ENCODE measurements at regions of chr1 and their contacts with region 1.

Region 1: GRCh38 chr1:86833461-86834215 is 80.3 kb downstream of the SELENOF start:
- DNase-seq: peak; percentile 62
- H3K4me3 Mint-ChIP-seq: no peak overlapping the region
- H3K27ac Mint-ChIP-seq: no peak overlapping the region
- H3K4me1 Mint-ChIP-seq: peaks cover 5% of the 10 kb centered on the region
- H3K27me3 Mint-ChIP-seq: peaks cover 2% of the 10 kb centered on the region

Region 2: DNA sequence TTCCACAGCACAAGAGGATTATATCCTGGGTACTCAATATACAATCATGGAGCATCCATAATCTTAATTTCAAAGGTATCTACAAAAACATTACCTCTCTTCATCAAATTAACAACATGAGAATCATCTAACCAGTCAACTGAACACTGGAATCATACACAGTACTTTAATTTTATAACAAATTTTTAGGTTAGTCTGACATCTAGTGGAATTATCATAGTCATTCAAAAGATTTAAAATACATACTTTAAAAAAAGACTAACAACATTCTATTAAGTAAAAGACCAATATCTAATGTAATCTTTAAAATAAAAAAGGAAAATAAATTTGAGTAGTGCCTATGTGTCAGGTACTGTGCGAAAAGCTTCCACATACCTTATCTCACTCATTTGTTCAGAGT is 146.0 kb before region 1 on chr1:
- CTCF ChIA-PET with region 1: no interaction called
- POLR2A ChIA-PET with region 1: no interaction called
- intact Hi-C with region 1: no loop called
- DNase-seq: no peak
- H3K4me3 Mint-ChIP-seq: no peak overlapping the region
- H3K27ac Mint-ChIP-seq: no peak overlapping the region
- H3K4me1 Mint-ChIP-seq: no peaks in the 10 kb centered on the region
- H3K27me3 Mint-ChIP-seq: no peaks in the 10 kb centered on the region

Region 3: DNA sequence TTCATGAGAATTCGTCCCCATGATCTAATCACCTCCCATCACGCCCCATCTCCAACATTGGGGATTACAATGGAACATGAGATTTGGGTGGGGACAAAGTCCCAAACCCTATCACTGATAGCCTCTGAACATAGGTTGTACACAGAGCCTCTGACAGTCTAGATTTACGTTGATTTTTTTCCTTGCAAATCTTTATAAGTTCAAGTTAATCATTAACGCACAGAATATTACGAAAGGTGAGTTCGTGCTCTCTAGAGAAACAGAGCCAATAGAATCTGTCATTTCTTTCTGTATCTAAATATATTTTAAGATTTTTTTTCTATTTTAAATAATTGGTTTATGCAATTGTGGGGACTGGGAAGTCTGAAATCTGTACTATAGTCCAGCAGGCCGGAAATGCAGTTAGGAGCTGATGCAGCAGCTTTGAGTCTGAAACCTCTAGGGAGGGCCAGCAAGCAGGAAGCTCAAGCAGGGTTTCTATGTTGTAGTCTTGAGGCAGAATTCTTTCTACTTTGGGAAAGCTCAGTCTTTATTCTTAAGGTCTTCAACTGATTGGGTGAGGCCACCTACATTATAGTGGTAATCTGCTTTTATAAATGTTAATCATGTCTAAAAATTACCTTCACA is 19.3 kb after region 1 on chr1:
- CTCF ChIA-PET with region 1: no interaction called
- POLR2A ChIA-PET with region 1: no interaction called
- intact Hi-C with region 1: no loop called
- DNase-seq: no peak
- H3K4me3 Mint-ChIP-seq: no peak overlapping the region
- H3K27ac Mint-ChIP-seq: no peak overlapping the region
- H3K4me1 Mint-ChIP-seq: no peaks in the 10 kb centered on the region
- H3K27me3 Mint-ChIP-seq: no peaks in the 10 kb centered on the region

Region 4: DNA sequence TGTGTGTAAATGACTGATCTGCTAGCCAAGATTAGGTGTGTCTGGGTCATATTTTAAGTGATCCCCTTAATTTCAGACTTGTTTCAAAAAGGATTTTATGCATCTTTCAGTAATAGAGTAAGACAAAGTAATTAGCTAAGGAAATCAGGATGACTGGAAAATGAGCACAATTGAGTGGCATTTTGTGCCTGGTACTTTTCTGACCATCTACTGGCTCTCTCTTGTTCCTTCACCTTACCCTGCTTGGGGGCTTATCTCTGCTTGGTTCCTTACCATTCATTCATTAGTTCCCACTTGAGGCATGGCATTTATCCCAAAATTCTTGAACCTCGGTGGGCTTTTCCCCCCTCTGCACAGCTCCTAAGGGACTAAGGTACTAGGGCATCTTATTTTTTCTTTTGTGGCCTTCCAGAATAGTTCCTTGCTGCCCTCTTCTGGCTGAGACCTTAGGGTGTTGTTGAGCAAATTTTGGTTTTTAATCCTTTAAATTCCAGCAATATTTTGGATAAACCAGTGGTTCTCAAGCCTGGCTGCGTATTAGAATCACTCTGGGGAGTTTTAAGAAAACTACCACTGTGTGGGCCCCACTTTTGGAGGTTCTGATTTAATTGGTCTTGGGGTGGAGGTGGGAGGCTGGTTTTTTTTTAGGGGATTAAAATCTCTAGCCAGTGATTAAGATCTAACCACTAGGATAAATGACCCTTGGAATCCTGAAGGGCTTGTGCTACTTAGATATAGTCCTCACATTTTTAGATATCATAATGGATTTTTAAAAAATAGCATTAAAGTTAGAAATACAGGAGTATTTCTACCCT is 131.6 kb after region 1 on chr1:
- CTCF ChIA-PET with region 1: interaction called, 11 read pairs
- POLR2A ChIA-PET with region 1: no interaction called
- intact Hi-C with region 1: loop called (anchors 1 kb)
- DNase-seq: no peak
- H3K4me3 Mint-ChIP-seq: no peak overlapping the region
- H3K27ac Mint-ChIP-seq: no peak overlapping the region
- H3K4me1 Mint-ChIP-seq: no peaks in the 10 kb centered on the region
- H3K27me3 Mint-ChIP-seq: no peaks in the 10 kb centered on the region

Region 5: DNA sequence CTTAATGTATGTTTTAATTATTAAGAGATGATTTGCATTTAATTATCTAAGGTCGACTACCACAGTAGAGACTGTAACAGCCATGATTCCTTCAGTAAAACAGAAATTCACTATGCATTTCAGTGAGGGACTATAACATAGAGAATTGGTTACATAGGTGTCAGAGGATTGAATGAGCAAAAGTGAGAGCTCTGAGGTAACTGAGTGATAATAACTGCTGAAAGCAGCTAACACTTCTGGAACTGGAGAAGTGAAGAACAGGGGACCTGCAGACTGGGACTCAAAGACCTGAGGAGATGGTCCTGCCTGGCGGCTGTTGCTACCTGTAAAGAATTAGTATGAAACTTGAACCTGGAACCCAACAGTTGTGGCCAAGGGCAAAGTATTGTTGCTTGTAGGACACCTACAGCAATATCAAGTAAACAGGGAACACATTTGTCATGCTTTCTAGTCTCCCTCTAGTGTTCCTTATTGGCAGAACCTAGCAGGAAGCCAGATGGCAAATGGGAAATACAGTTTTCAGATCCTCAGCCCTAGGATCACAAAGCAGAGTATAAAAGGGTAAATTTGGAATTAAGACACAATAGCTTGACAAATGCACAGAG is 191.4 kb after region 1 on chr1:
- CTCF ChIA-PET with region 1: no interaction called
- POLR2A ChIA-PET with region 1: no interaction called
- intact Hi-C with region 1: loop called (anchors 5 kb)
- DNase-seq: no peak
- H3K4me3 Mint-ChIP-seq: no peak overlapping the region
- H3K27ac Mint-ChIP-seq: no peak overlapping the region
- H3K4me1 Mint-ChIP-seq: peaks cover 7% of the 10 kb centered on the region
- H3K27me3 Mint-ChIP-seq: no peaks in the 10 kb centered on the region

Region 6: DNA sequence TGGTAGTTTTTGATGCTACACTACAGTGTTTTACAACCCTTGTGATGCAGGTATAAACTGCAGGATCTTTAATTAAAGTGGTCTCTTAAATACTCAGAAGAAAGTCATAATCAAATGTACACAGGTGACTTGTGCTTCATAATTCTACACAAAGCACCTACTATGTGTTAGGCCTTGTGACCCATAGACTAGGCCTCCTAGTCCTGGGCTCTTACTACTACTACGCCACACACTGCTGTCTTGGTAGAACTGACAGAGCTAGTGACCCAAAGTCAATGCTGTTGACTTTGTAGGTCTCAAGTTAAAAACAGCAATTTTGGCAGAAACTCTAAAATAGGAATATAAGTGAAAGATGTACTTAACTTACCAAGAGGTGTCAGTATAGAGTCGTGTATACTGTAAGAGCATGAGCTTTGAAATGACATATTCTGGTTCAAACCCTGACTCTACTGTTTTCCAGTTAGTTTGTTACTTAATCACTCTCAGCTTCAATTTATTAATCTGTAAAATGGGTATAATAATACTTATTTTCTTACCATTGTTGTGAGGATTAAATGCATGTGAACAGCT is 446.4 kb after region 1 on chr1:
- CTCF ChIA-PET with region 1: no interaction called
- POLR2A ChIA-PET with region 1: no interaction called
- intact Hi-C with region 1: no loop called
- DNase-seq: no peak
- H3K4me3 Mint-ChIP-seq: no peak overlapping the region
- H3K27ac Mint-ChIP-seq: no peak overlapping the region
- H3K4me1 Mint-ChIP-seq: no peaks in the 10 kb centered on the region
- H3K27me3 Mint-ChIP-seq: peaks cover 3% of the 10 kb centered on the region